Activated CD4-positive, alpha-beta T cell treated with anti-CD3 and anti-CD28 coated beads for 36 hours (primary cell): ENCODE measurements at regions of chr16 and their contacts with region 1.

Region 1: GRCh38 chr16:48156790-48157209 is 1.0 kb upstream of the ABCC12 start:
- DNase-seq: peak; percentile 93
- ATAC-seq: peak; percentile 50
- H3K4me3 Mint-ChIP-seq: no peak overlapping the region
- H3K27ac Mint-ChIP-seq: no peak overlapping the region
- H3K4me1 Mint-ChIP-seq: peaks cover 25% of the 10 kb centered on the region
- H3K27me3 Mint-ChIP-seq: peaks cover 30% of the 10 kb centered on the region

Region 2: GRCh38 chr16:46947900-46948547 is 1208.8 kb before region 1 on chr16:
- CTCF ChIA-PET with region 1: no interaction called
- POLR2A ChIA-PET with region 1: no interaction called
- intact Hi-C with region 1: loop called in 1 of 2 experiments (anchors 2 kb)
- DNase-seq: peak; percentile 56
- ATAC-seq: peak; percentile 64
- H3K4me3 Mint-ChIP-seq: no peak overlapping the region
- H3K27ac Mint-ChIP-seq: peak overlapping the region; percentile 70
- H3K4me1 Mint-ChIP-seq: peaks cover 22% of the 10 kb centered on the region
- H3K27me3 Mint-ChIP-seq: no peaks in the 10 kb centered on the region

Region 3: DNA sequence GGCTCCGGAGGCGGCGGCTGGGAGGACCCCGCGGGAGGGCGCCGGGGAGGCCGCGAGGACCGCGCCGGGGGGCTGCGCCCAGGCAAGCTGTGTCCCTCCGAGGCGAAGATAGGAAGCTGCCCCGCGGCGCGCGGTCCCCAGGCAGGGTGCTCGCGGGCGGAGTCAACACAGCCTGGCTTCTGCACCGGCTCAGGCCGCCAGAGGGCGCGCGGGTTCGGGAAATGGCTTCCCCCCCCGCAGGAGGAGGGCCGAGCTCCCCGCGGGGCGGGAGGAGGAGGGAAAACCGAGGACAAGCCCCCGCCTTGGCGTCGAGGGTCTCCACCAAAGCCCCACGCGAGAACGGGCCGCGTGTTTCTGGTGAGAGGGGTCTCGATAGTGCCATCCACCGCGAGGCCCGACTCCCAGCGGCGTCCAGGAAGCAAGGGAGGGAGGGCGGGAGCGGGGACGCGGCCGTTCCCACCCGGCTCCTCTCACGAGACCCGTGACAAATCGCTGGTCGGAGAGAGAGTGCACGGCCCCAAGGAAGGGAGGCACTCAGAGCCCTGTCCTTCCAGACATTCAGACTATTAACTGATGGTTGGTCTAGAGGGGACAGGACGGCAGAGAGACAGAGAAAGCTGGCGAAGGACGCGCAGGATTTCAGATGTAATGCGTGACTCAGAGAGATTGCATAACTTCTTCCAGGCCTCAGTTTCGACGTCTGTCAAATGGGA is 1118.9 kb before region 1 on chr16:
- CTCF ChIA-PET with region 1: interaction called, 5 read pairs
- POLR2A ChIA-PET with region 1: no interaction called
- intact Hi-C with region 1: loop called in 1 of 2 experiments (anchors 5 kb)
- DNase-seq: peak; percentile 94
- ATAC-seq: peak; percentile 98
- H3K4me3 Mint-ChIP-seq: peak overlapping the region; percentile 65
- H3K27ac Mint-ChIP-seq: no peak overlapping the region
- H3K4me1 Mint-ChIP-seq: peaks cover 2% of the 10 kb centered on the region
- H3K27me3 Mint-ChIP-seq: peaks cover 8% of the 10 kb centered on the region

Region 4: DNA sequence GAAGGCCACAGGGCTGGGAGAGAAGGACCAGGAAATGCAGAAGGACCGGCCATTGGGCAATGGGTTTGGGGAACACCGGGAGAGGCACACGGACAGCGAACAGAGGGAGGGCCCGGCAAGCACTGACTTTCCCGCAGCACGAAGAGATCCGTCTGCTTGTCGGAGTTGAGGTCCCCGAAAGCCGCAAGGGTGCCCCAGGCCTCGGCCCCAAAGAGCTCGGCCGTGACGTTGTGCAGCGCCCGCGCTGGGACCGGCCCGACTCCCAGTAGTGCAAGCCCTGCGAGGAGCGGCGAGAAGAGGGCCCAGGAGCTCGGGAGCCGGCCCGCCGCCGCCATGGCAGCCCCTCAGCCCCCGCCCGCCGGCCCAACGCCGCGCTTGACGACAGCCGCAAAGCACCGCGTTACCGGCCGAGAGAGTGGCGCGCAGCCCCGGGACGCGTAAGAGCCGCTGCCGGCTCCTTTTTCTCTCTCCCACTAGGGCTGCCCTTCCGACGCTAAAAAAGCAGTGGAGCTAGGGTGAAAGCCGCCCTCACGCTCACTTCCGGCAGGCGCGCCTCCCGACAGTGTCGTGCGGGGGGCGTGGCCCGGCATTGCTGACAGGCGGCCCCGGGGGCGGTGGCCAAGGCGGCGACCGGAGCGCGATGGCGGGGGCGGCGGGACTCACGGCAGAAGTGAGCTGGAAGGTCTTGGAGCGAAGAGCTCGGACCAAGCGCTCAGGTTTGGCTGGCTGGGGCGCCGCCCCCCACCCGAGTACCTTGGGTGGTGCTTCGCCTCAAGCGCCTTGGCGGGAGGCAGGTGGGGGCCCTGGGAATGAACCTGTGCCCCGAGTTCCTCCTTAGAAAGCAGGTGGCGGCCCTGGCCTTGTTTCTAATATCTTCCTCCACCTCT is 695.8 kb before region 1 on chr16 and contains the starts of genes ITFG1 and PHKB:
- CTCF ChIA-PET with region 1: interaction called, 4 read pairs
- POLR2A ChIA-PET with region 1: no interaction called
- intact Hi-C with region 1: loop called (anchors 2 to 10 kb)
- DNase-seq: peak; percentile 97
- ATAC-seq: peak; percentile 95
- H3K4me3 Mint-ChIP-seq: peak within 1 kb of the TSS; percentile 97
- H3K27ac Mint-ChIP-seq: peak within 1 kb of the TSS; percentile 97
- H3K4me1 Mint-ChIP-seq: peaks cover 58% of the 10 kb centered on the region
- H3K27me3 Mint-ChIP-seq: no peaks in the 10 kb centered on the region
- total RNA-seq, gene ITFG1: 18.9 to 27.0 TPM
- total RNA-seq, gene PHKB: 12.6 to 12.8 TPM

Region 5: DNA sequence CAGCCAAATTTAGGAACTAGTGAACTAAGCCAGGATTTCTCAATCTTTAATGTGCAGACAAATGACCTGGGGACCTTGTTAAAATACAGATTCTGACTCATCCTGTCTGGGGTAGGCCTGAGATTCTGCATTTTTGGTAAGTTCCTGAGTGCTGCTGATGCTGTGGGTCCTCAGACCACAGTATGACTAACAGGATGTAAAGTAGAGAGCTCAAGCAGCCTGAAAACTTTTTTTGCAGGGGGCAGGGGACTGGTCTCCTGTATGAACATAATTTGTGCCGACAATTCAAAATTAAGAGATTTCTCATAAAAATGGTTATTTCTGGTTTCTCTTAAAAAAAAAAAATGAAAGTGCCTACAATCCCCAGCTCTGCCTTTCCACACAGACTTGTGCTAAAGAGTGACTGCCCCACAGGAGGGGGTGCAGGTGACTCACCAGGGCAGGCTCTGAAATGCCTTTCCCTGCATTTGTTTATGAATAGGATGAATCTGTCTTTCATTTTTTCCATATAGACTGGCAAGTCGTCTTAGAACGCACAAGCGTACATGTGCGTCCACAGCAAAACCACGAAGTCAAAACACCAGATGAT is 424.2 kb before region 1 on chr16:
- CTCF ChIA-PET with region 1: no interaction called
- POLR2A ChIA-PET with region 1: no interaction called
- intact Hi-C with region 1: loop called in 1 of 2 experiments (anchors 2 kb)
- DNase-seq: peak; percentile 51
- ATAC-seq: peak; percentile 91
- H3K4me3 Mint-ChIP-seq: no peak overlapping the region
- H3K27ac Mint-ChIP-seq: peak overlapping the region; percentile 56
- H3K4me1 Mint-ChIP-seq: peaks cover 6% of the 10 kb centered on the region
- H3K27me3 Mint-ChIP-seq: peaks cover 2% of the 10 kb centered on the region

Region 6: DNA sequence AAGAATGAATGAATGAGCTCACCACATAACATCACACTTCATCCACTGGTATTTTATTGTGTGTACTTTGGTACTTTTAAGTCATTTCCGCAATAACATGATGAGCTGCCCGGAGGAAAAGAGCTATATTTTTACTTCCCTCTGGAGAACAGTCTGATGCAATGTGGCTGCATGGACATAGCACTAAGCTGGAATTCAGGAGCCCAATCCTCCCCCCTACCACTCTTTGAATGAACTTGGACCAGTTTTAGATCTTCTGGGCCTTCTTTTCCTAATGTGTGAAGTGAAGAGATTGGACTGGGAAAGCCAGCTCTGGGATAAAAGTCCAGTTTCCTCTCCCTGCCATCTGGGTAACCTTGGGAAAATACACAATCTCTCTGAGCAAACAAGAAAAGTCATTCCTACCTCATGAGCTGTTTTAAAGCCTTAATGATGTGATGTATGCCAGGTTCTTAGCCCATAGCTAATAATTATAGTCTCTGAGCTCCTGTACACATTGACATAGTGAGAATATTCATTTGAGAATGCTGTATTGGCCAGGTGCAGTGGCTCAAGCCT is 80.3 kb before region 1 on chr16:
- CTCF ChIA-PET with region 1: no interaction called
- POLR2A ChIA-PET with region 1: no interaction called
- intact Hi-C with region 1: no loop called
- DNase-seq: no peak
- ATAC-seq: no peak
- H3K4me3 Mint-ChIP-seq: no peak overlapping the region
- H3K27ac Mint-ChIP-seq: no peak overlapping the region
- H3K4me1 Mint-ChIP-seq: no peaks in the 10 kb centered on the region
- H3K27me3 Mint-ChIP-seq: peaks cover 10% of the 10 kb centered on the region

Region 7: GRCh38 chr16:48100696-48101674 is 55.8 kb before region 1 on chr16:
- CTCF ChIA-PET with region 1: interaction called, 4 read pairs
- POLR2A ChIA-PET with region 1: no interaction called
- intact Hi-C with region 1: loop called in 1 of 2 experiments (anchors 2 kb)
- DNase-seq: peak; percentile 78
- ATAC-seq: peak; percentile 89
- H3K4me3 Mint-ChIP-seq: no peak overlapping the region
- H3K27ac Mint-ChIP-seq: no peak overlapping the region
- H3K4me1 Mint-ChIP-seq: peaks cover 11% of the 10 kb centered on the region
- H3K27me3 Mint-ChIP-seq: peaks cover 21% of the 10 kb centered on the region

Region 8: DNA sequence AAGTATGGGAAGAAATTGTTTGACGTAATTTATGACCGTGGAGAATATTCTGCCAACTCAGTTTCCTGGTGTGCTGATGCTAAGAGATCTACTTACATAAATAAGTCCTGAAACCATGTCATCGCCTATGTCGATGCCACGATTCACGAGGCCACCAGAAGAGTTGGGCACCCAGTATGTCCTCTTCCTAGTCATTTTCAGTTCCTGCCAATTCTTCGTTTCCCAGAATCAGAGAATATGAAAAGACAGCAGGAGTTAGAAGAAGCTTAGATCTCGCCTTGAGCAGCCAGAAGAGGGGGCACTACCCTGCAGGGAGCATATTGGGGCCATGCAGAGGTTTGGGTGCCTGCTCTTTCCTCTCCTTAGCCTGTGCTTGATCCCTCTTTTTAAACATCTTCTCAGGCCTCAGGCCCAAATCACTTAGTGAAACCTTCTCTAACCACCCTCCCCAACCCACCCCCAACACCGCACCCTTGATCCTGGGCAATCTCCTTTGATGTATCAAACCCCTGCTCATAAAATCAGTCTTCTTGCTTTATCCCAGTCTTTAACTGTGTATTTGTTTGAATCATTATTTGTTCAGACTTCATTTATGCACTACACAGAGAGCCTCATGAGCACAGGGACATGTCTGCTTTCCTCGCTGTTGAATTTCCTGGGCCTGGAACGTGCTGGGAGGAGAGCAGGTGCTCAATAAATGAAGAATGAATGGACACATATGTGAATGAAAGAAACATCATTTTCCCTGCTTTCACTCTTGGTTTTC is 75.1 kb after region 1 on chr16:
- CTCF ChIA-PET with region 1: no interaction called
- POLR2A ChIA-PET with region 1: no interaction called
- intact Hi-C with region 1: loop called in 1 of 2 experiments (anchors 2 kb)
- DNase-seq: peak; percentile 72
- ATAC-seq: peak; percentile 83
- H3K4me3 Mint-ChIP-seq: peak overlapping the region; percentile 20
- H3K27ac Mint-ChIP-seq: peak overlapping the region; percentile 65
- H3K4me1 Mint-ChIP-seq: peaks cover 22% of the 10 kb centered on the region
- H3K27me3 Mint-ChIP-seq: peaks cover 5% of the 10 kb centered on the region